Naive thymus-derived CD4-positive, alpha-beta T cell (primary cell): ENCODE measurements at regions of chr10 and their contacts with region 1.

Region 1: DNA sequence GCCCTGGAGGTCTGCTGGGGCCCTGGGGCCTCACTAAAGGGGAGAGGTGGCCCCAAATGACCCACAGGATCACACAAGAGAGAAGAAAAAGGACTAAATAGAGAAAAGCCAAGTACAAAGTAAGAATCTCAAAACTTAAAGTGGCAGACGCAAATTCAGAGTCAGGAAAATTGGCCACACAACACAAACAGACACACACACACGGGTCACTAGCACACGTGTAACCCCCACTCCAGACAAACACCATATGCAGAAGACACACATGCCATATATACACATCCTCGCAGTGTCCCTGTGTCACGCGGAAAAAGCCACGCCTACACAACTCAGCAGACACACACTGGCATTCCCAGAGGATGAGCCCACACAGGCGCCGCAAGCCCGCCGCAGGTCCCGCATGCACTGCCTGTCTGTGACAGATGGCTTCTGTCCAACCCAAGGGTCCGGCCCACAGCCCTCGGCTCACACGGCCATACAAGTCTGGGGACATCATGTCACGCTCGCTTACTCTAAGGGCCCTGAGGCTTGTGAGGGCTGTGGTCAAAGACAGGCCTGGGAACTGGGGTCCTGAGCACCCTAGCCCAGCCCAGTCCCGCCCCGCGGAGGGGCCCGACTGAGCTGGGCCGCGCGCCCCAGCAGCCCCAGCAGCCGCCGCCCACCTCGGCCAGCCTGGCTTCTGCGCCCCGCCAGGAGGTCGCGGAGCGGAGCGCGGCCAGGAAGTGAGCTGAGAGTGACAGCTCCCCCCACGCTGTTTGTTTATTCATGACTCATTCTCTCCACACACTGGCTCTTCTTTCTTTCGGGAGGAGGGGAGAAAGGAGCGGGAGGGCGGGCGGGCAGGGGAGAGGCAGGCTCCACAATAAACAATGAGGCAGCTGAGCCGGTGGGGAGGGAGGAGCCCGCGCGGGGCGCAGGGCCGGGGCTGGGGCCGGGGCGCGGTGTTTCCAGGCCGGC is 95.5 kb upstream of the ZMIZ1 start:
- DNase-seq: peak; percentile 24 to 83 (median 43)
- ATAC-seq: peak; percentile 72
- H3K4me3 ChIP-seq: peak overlapping the region; percentile 13
- H3K4me3 Mint-ChIP-seq: peak overlapping the region; percentile 72 to 89 (median 84)
- H3K27ac ChIP-seq: no peak overlapping the region
- H3K27ac Mint-ChIP-seq: peak overlapping the region in 7 of 9 donors; percentile 2 to 85 (median 66)
- H3K4me1 ChIP-seq: peaks cover 8 to 11% of the 10 kb centered on the region in 2 donors
- H3K4me1 Mint-ChIP-seq: peaks cover 15 to 28% (median 17%) of the 10 kb centered on the region in 7 donors
- H3K27me3 ChIP-seq: no peaks in the 10 kb centered on the region
- H3K27me3 Mint-ChIP-seq: peaks cover 0 to 8% (median 0%) of the 10 kb centered on the region in 5 donors

Region 2: GRCh38 chr10:78029269-78030226 is 943.7 kb before region 1 on chr10 and contains the start of gene POLR3A:
- CTCF ChIA-PET with region 1: no interaction called
- POLR2A ChIA-PET with region 1: no interaction called
- intact Hi-C with region 1: loop called (anchors 1 to 5 kb)
- DNase-seq: peak; percentile 79 to 94 (median 90)
- ATAC-seq: peak; percentile 77
- H3K4me3 ChIP-seq: peak within 1 kb of the TSS; percentile 99
- H3K4me3 Mint-ChIP-seq: peak within 1 kb of the TSS; percentile 92 to 100 (median 99)
- H3K27ac ChIP-seq: peak within 1 kb of the TSS; percentile 89
- H3K27ac Mint-ChIP-seq: peak within 1 kb of the TSS; percentile 88 to 99 (median 95)
- H3K4me1 ChIP-seq: peaks cover 12 to 19% of the 10 kb centered on the region in 2 donors
- H3K4me1 Mint-ChIP-seq: peaks cover 22 to 50% (median 37%) of the 10 kb centered on the region in 7 donors
- H3K27me3 ChIP-seq: no peaks in the 10 kb centered on the region
- H3K27me3 Mint-ChIP-seq: no peaks in the 10 kb centered on the region
- total RNA-seq, gene POLR3A: 12.0 to 20.9 (median 19.0) TPM

Region 3: DNA sequence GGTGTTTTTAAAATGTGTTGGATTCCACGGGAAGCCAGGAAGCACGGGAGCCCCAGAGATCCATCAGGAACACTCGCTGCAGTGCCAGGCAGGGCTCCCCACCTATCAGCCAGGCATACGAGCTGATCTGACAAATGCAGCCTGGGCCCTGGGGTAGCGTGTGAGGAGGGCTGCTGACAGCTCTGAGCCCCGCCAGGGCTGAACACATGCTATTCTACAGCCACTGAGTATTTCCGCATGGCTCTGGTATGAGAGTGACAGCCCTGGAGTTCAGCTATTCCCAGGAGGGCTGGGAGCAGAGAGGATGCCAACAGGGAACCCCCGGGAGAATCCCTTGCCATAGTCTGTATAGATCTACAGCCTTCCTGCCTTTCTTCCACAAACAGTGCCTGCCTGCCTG is 141.8 kb before region 1 on chr10:
- CTCF ChIA-PET with region 1: no interaction called
- POLR2A ChIA-PET with region 1: no interaction called
- intact Hi-C with region 1: no loop called
- DNase-seq: no peak
- ATAC-seq: no peak
- H3K4me3 ChIP-seq: no peak overlapping the region
- H3K4me3 Mint-ChIP-seq: no peak overlapping the region
- H3K27ac ChIP-seq: no peak overlapping the region
- H3K27ac Mint-ChIP-seq: no peak overlapping the region
- H3K4me1 ChIP-seq: no peaks in the 10 kb centered on the region
- H3K4me1 Mint-ChIP-seq: peaks cover 0 to 6% (median 0%) of the 10 kb centered on the region in 7 donors
- H3K27me3 ChIP-seq: no peaks in the 10 kb centered on the region
- H3K27me3 Mint-ChIP-seq: peaks cover 23 to 40% (median 34%) of the 10 kb centered on the region in 5 donors

Region 4: DNA sequence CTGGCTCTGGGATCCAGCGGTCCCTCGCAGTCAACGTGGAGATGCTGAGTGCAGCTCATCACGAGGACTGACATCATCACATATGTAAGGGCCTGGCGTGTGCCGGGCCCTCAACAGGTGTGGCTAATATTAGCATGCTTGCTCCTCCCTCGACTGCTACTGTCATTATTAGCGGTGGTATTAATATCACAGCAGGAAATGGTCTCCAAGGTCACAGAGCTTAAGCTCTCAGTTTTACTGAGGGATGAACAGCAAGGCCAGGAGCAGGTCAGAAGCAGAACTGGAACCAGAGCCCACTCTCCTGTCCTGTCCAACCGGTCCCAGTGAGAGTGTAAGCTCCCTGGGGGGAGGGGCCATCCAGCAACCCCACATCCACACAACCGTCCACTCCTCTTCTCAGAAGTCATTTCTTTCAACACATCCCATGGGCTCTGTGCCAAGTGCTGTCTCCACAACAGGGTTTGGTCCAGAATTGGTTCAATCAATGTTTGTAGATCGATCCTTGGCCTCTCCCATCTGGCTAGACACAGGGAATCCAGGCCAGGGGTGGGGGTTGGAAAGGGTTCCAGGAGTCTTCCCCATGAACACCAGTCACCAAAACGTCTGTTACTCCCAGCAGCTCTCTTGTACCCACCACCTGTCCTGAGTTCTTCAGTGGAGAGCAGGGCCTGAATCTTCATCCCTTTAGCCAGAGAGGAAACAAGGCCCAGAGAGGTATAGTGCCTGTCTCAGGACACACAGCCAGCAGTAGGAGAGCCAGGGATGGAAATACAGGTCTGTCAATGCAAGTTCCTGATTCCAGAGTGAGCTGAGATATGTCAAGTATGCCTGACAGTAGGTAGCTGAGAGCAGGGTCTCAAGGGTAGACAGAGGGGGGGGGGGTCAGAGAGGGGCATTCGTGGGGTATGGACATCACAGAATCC is 50.3 kb after region 1 on chr10:
- CTCF ChIA-PET with region 1: no interaction called
- POLR2A ChIA-PET with region 1: no interaction called
- intact Hi-C with region 1: loop called in 1 of 2 experiments (anchors 5 kb)
- DNase-seq: no peak
- ATAC-seq: no peak
- H3K4me3 ChIP-seq: no peak overlapping the region
- H3K4me3 Mint-ChIP-seq: peak overlapping the region in 3 of 10 donors; percentile 0 to 85 (median 12)
- H3K27ac ChIP-seq: no peak overlapping the region
- H3K27ac Mint-ChIP-seq: peak overlapping the region in 6 of 9 donors; percentile 39 to 76 (median 60)
- H3K4me1 ChIP-seq: peaks cover 29 to 37% of the 10 kb centered on the region in 2 donors
- H3K4me1 Mint-ChIP-seq: peaks cover 19 to 48% (median 36%) of the 10 kb centered on the region in 7 donors
- H3K27me3 ChIP-seq: no peaks in the 10 kb centered on the region
- H3K27me3 Mint-ChIP-seq: peaks cover 0 to 5% (median 0%) of the 10 kb centered on the region in 5 donors

Region 5: GRCh38 chr10:79052291-79053080 is 79.3 kb after region 1 on chr10:
- CTCF ChIA-PET with region 1: interaction called, 7 read pairs
- POLR2A ChIA-PET with region 1: interaction called, 4 read pairs
- intact Hi-C with region 1: loop called (anchors 1 kb)
- DNase-seq: peak in 7 of 9 donors; percentile 52 to 76 (median 63)
- ATAC-seq: peak; percentile 75
- H3K4me3 ChIP-seq: no peak overlapping the region
- H3K4me3 Mint-ChIP-seq: peak overlapping the region in 4 of 10 donors; percentile 16 to 48 (median 38)
- H3K27ac ChIP-seq: no peak overlapping the region
- H3K27ac Mint-ChIP-seq: peak overlapping the region in 3 of 9 donors; percentile 30 to 81 (median 53)
- H3K4me1 ChIP-seq: peaks cover 17 to 30% of the 10 kb centered on the region in 2 donors
- H3K4me1 Mint-ChIP-seq: peaks cover 25 to 56% (median 46%) of the 10 kb centered on the region in 7 donors
- H3K27me3 ChIP-seq: no peaks in the 10 kb centered on the region
- H3K27me3 Mint-ChIP-seq: no peaks in the 10 kb centered on the region

Region 6: GRCh38 chr10:79137826-79138225 is 164.6 kb after region 1 on chr10:
- CTCF ChIA-PET with region 1: no interaction called
- POLR2A ChIA-PET with region 1: no interaction called
- intact Hi-C with region 1: loop called in 1 of 2 experiments (anchors 5 kb)
- DNase-seq: peak in 5 of 9 donors; percentile 16 to 45 (median 27)
- ATAC-seq: peak; percentile 71
- H3K4me3 ChIP-seq: peak overlapping the region; percentile 41
- H3K4me3 Mint-ChIP-seq: peak overlapping the region; percentile 47 to 80 (median 71)
- H3K27ac ChIP-seq: peak overlapping the region; percentile 49
- H3K27ac Mint-ChIP-seq: peak overlapping the region; percentile 62 to 93 (median 86)
- H3K4me1 ChIP-seq: peaks cover 28 to 40% of the 10 kb centered on the region in 2 donors
- H3K4me1 Mint-ChIP-seq: peaks cover 36 to 64% (median 56%) of the 10 kb centered on the region in 7 donors
- H3K27me3 ChIP-seq: no peaks in the 10 kb centered on the region
- H3K27me3 Mint-ChIP-seq: no peaks in the 10 kb centered on the region

Region 7: DNA sequence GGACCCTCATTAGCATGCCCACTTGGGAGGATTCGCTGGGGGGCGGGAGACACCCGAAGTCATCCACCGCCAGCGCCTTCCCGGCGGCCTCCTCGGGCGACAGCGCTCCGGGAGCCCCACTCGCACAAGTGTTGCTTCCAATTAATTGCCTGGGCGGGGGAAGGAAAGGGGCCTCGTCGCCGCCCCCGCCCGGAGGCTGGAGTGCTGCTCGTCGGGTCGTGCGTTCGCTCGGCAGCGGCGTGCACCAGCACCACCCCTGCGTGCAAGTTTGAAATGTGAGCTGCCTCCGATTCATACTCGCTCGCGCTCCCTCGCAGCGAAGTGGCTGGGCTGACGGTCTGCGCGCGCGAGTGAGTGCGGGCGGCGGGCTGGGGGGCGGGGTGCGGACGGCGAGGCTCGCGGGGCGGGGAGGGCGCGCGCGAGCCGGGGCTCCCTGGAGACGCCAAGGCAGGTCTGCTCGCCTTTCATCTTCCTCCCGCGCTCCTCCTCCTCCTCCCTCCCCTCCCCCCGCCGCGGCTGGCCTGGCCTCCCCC is 269.5 kb after region 1 on chr10:
- CTCF ChIA-PET with region 1: no interaction called
- POLR2A ChIA-PET with region 1: no interaction called
- intact Hi-C with region 1: loop called in 1 of 2 experiments (anchors 5 kb)
- DNase-seq: peak; percentile 6 to 71 (median 35)
- ATAC-seq: peak; percentile 39
- H3K4me3 ChIP-seq: peak overlapping the region; percentile 37
- H3K4me3 Mint-ChIP-seq: peak overlapping the region; percentile 43 to 87 (median 77)
- H3K27ac ChIP-seq: no peak overlapping the region
- H3K27ac Mint-ChIP-seq: peak overlapping the region in 1 of 9 donors; percentile 80
- H3K4me1 ChIP-seq: peaks cover 27 to 38% of the 10 kb centered on the region in 2 donors
- H3K4me1 Mint-ChIP-seq: peaks cover 39 to 58% (median 41%) of the 10 kb centered on the region in 7 donors
- H3K27me3 ChIP-seq: no peaks in the 10 kb centered on the region
- H3K27me3 Mint-ChIP-seq: no peaks in the 10 kb centered on the region